CD8-positive, alpha-beta T cell (primary cell): ENCODE measurements at regions of chr12 and their contacts with region 1.

Region 1: GRCh38 chr12:103930034-103930786 is at the start of gene HSP90B1:
- DNase-seq: peak; percentile 99 to 100 (median 99)
- ATAC-seq: peak; percentile 74
- H3K4me3 ChIP-seq: peak within 1 kb of the TSS; percentile 67 to 91
- H3K4me3 Mint-ChIP-seq: peak within 1 kb of the TSS; percentile 83
- H3K27ac ChIP-seq: peak within 1 kb of the TSS; percentile 96 to 98
- H3K27ac Mint-ChIP-seq: peak within 1 kb of the TSS; percentile 97
- H3K4me1 ChIP-seq: peaks cover 43% of the 10 kb centered on the region
- H3K4me1 Mint-ChIP-seq: peaks cover 64% of the 10 kb centered on the region
- H3K27me3 ChIP-seq: no peaks in the 10 kb centered on the region
- H3K27me3 Mint-ChIP-seq: no peaks in the 10 kb centered on the region
- CTCF ChIP-seq: no peak
- total RNA-seq, gene HSP90B1: 173 to 179 TPM

Region 2: DNA sequence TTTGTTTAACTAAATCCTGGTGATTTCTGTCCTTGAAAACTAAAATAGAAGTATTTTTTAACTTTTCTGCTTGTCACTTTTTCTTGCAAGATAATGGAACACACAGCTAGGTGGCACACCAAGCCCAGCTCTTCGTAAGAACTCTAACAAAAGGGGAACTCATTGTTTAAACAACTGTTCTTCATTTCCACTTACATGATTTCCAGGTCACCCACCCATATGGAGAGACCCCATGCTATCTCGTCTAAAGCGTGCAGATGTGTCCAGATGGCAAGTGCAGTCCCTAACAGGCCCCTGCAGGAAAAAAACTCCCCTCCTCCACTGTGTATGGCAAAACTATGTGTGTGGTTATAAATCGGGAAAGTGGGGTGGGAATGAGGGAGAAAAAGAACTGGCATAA is 45.9 kb before region 1 on chr12:
- CTCF ChIA-PET with region 1: interaction called, 8 read pairs
- POLR2A ChIA-PET with region 1: interaction called, 8 read pairs
- intact Hi-C with region 1: loop called (anchors 1 to 2 kb)
- DNase-seq: peak; percentile 10 to 76 (median 43)
- ATAC-seq: peak; percentile 67
- H3K4me3 ChIP-seq: no peak overlapping the region
- H3K4me3 Mint-ChIP-seq: no peak overlapping the region
- H3K27ac ChIP-seq: no peak overlapping the region
- H3K27ac Mint-ChIP-seq: no peak overlapping the region
- H3K4me1 ChIP-seq: peaks cover 11% of the 10 kb centered on the region
- H3K4me1 Mint-ChIP-seq: peaks cover 32% of the 10 kb centered on the region
- H3K27me3 ChIP-seq: no peaks in the 10 kb centered on the region
- H3K27me3 Mint-ChIP-seq: no peaks in the 10 kb centered on the region
- CTCF ChIP-seq: peak; percentile 71

Region 3: DNA sequence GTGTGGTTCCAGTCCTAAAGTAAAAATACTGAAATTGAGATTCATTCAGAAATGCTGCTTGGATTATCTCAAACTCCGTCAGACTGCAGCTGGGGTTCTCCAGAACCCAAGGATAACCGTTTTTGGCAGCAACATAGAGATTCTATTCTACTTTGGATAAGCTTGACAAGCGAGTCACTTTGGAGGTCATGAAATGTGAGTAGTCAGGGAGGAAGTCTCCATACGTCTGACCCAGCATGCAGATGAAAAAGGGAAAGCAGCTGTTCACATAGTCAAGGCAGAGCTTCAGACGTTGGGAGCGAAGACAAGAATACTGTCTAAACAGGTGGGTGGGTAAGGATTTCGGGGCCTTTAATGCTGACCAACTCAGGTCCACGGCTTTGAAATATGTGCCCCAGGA is 14.9 kb before region 1 on chr12:
- CTCF ChIA-PET with region 1: interaction called, 4 read pairs
- POLR2A ChIA-PET with region 1: interaction called, 13 read pairs
- intact Hi-C with region 1: no loop called
- DNase-seq: no peak
- ATAC-seq: no peak
- H3K4me3 ChIP-seq: no peak overlapping the region
- H3K4me3 Mint-ChIP-seq: no peak overlapping the region
- H3K27ac ChIP-seq: no peak overlapping the region
- H3K27ac Mint-ChIP-seq: no peak overlapping the region
- H3K4me1 ChIP-seq: no peaks in the 10 kb centered on the region
- H3K4me1 Mint-ChIP-seq: no peaks in the 10 kb centered on the region
- H3K27me3 ChIP-seq: no peaks in the 10 kb centered on the region
- H3K27me3 Mint-ChIP-seq: no peaks in the 10 kb centered on the region
- CTCF ChIP-seq: no peak

Region 4: DNA sequence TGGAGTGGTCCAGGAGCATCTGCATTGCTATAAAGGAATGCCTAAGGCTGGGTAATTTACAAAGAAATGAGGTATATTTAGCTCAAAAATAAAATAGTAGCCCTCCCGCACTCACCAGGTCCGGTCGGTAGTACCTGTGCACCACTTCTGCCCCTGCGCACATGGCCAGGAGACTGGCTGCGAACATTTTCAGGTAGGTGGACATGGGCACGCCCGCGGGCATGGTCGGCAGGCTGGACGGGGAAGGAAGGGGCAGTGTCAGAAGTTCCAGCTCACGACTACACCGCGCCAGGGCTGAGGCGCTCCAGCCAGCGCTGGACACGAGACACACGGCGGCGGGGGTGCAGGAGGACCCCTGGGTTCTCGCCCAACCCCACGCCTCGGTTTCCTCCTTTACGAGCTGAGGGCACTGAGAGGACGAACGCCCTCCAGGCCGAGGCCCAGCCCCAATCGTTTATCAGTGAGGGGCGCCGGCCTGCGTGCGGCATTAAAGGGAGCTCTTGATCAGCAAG is 26.4 kb after region 1 on chr12:
- CTCF ChIA-PET with region 1: interaction called, 5 read pairs
- POLR2A ChIA-PET with region 1: interaction called, 21 read pairs
- intact Hi-C with region 1: loop called (anchors 1 kb)
- DNase-seq: peak in 2 of 9 experiments; percentile 1 to 9
- ATAC-seq: no peak
- H3K4me3 ChIP-seq: peak overlapping the region; percentile 65 to 86
- H3K4me3 Mint-ChIP-seq: peak overlapping the region; percentile 99
- H3K27ac ChIP-seq: peak overlapping the region; percentile 78 to 79
- H3K27ac Mint-ChIP-seq: peak overlapping the region; percentile 99
- H3K4me1 ChIP-seq: peaks cover 22% of the 10 kb centered on the region
- H3K4me1 Mint-ChIP-seq: peaks cover 31% of the 10 kb centered on the region
- H3K27me3 ChIP-seq: no peaks in the 10 kb centered on the region
- H3K27me3 Mint-ChIP-seq: no peaks in the 10 kb centered on the region
- CTCF ChIP-seq: no peak

Region 5: GRCh38 chr12:104137913-104138796 is 207.9 kb after region 1 on chr12 and contains the start of gene NFYB:
- CTCF ChIA-PET with region 1: no interaction called
- POLR2A ChIA-PET with region 1: interaction called, 16 read pairs
- intact Hi-C with region 1: loop called (anchors 1 kb)
- DNase-seq: peak; percentile 82 to 98 (median 90)
- ATAC-seq: peak; percentile 95
- H3K4me3 ChIP-seq: peak within 1 kb of the TSS; percentile 63 to 71
- H3K4me3 Mint-ChIP-seq: peak within 1 kb of the TSS; percentile 92
- H3K27ac ChIP-seq: peak within 1 kb of the TSS; percentile 57 to 58
- H3K27ac Mint-ChIP-seq: peak within 1 kb of the TSS; percentile 87
- H3K4me1 ChIP-seq: peaks cover 31% of the 10 kb centered on the region
- H3K4me1 Mint-ChIP-seq: peaks cover 16% of the 10 kb centered on the region
- H3K27me3 ChIP-seq: no peaks in the 10 kb centered on the region
- H3K27me3 Mint-ChIP-seq: no peaks in the 10 kb centered on the region
- CTCF ChIP-seq: no peak
- total RNA-seq, gene NFYB: 9.1 to 11.2 TPM